ENCODE measurements at regions of chr16 and their contacts with region 1.

Region 1: GRCh38 chr16:29790183-29790952 is at the start of gene KIF22:
- DNase-seq: peak; percentile 100
- H3K4me3 Mint-ChIP-seq: peak within 1 kb of the TSS; percentile 100
- H3K27ac Mint-ChIP-seq: peak within 1 kb of the TSS; percentile 95
- H3K4me1 Mint-ChIP-seq: peaks cover 48% of the 10 kb centered on the region
- H3K27me3 Mint-ChIP-seq: no peaks in the 10 kb centered on the region
- total RNA-seq, gene KIF22: 187 to 192 TPM

Region 2: DNA sequence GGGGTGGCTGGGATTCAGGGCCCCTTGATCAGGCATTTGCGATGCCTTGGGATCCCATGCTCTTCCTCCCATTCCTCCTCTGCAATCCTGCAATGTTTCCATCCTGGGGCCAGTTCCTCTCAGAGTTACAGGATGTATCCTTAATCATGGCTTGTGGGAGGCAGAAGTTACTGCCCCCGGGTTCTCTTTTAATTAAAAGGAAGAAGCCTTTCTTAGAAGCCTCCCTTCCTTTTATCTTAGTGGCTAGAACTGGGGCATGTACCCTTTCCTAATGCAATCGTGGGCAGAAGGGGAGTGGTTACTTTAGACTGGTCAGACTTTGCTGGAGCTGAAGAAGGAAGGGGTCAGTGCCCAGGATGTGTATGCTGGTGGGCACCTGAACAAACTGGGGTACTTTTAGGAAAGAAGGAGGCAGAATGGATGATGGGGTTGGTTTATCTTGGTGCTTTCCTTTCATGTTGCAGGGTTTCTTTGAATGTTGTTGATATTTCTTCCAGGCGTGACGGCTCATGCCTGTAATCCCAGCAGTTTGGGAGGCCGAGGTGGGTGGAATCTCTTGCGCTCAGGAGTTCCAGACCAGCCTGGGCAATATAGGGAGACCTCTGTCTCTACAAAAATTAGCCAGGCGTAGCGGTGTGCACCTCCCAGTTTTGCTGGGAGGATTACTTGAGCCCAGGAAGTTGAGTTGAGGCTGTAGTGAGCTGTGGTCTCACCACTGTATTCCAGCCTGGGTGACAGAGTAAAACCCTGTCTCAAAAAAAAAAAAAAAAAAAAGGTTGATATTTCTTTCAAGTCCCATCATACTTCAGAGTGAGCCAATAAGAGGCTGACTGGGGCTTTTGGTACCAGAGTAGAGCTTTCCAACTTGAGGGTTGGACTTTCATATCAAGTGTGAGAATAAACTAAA is 140.5 kb before region 1 on chr16:
- CTCF ChIA-PET with region 1: no interaction called
- POLR2A ChIA-PET with region 1: no interaction called
- DNase-seq: no peak
- H3K4me3 Mint-ChIP-seq: no peak overlapping the region
- H3K27ac Mint-ChIP-seq: no peak overlapping the region
- H3K4me1 Mint-ChIP-seq: peaks cover 25% of the 10 kb centered on the region
- H3K27me3 Mint-ChIP-seq: no peaks in the 10 kb centered on the region

Region 3: GRCh38 chr16:29729116-29729521 is 61.2 kb before region 1 on chr16:
- CTCF ChIA-PET with region 1: interaction called, 10 read pairs
- POLR2A ChIA-PET with region 1: interaction called, 8 read pairs
- DNase-seq: no peak
- H3K4me3 Mint-ChIP-seq: no peak overlapping the region
- H3K27ac Mint-ChIP-seq: no peak overlapping the region
- H3K4me1 Mint-ChIP-seq: peaks cover 30% of the 10 kb centered on the region
- H3K27me3 Mint-ChIP-seq: peaks cover 16% of the 10 kb centered on the region

Region 4: DNA sequence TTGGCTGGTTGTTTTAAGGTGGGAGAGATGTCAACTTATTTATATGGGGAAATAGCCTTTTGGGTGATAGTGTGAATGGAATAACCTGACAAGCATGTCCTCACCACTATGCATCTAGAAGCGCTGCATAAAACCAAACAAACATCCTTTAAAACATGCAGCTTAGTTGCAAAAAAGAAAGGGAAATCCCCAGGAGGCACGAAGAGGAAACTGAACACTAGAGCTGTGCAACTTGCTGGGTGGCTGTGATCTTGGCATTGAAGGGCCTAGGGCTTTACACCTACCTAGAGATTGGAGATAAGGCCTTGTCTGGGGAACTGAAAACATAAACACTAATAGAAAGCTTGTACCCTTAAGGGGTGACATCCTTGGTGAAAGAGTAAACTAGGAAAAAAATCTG is 51.9 kb before region 1 on chr16:
- CTCF ChIA-PET with region 1: interaction called, 12 read pairs
- POLR2A ChIA-PET with region 1: interaction called, 27 read pairs
- DNase-seq: peak; percentile 56
- H3K4me3 Mint-ChIP-seq: no peak overlapping the region
- H3K27ac Mint-ChIP-seq: peak overlapping the region; percentile 74
- H3K4me1 Mint-ChIP-seq: peaks cover 68% of the 10 kb centered on the region
- H3K27me3 Mint-ChIP-seq: no peaks in the 10 kb centered on the region

Region 5: GRCh38 chr16:29745853-29746345 is 44.5 kb before region 1 on chr16 and contains the start of gene C16orf54:
- CTCF ChIA-PET with region 1: interaction called, 16 read pairs
- POLR2A ChIA-PET with region 1: interaction called, 45 read pairs
- DNase-seq: peak; percentile 98
- H3K4me3 Mint-ChIP-seq: peak within 1 kb of the TSS; percentile 98
- H3K27ac Mint-ChIP-seq: peak within 1 kb of the TSS; percentile 93
- H3K4me1 Mint-ChIP-seq: peaks cover 67% of the 10 kb centered on the region
- H3K27me3 Mint-ChIP-seq: no peaks in the 10 kb centered on the region
- total RNA-seq, gene C16orf54: 94.6 to 99.2 TPM

Region 6: GRCh38 chr16:29757950-29758466 is 32.4 kb before region 1 on chr16:
- CTCF ChIA-PET with region 1: interaction called, 12 read pairs
- POLR2A ChIA-PET with region 1: interaction called, 8 read pairs
- DNase-seq: no peak
- H3K4me3 Mint-ChIP-seq: no peak overlapping the region
- H3K27ac Mint-ChIP-seq: no peak overlapping the region
- H3K4me1 Mint-ChIP-seq: peaks cover 19% of the 10 kb centered on the region
- H3K27me3 Mint-ChIP-seq: no peaks in the 10 kb centered on the region

Region 7: DNA sequence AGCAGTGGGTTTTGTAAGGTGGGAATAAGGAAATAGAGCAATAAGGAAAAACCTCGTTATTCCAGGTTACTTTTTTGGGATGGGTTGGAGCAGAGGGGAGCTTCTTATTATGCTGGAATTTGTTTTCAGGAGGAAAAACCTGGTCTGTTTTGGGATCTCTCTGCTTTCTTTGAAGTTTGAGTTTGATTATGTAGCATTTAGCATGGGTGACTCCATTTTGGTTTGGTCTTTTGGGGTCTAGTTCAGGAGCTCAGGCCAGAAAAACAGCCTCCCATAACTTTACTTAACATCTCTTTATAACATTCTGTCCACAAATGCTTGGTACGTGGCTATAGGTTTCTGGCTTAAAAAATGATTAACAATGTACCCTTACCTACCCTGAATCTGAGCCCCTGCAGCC is 20.9 kb before region 1 on chr16:
- CTCF ChIA-PET with region 1: interaction called, 9 read pairs
- POLR2A ChIA-PET with region 1: interaction called, 10 read pairs
- DNase-seq: no peak
- H3K4me3 Mint-ChIP-seq: no peak overlapping the region
- H3K27ac Mint-ChIP-seq: no peak overlapping the region
- H3K4me1 Mint-ChIP-seq: no peaks in the 10 kb centered on the region
- H3K27me3 Mint-ChIP-seq: peaks cover 1% of the 10 kb centered on the region

Region 8: DNA sequence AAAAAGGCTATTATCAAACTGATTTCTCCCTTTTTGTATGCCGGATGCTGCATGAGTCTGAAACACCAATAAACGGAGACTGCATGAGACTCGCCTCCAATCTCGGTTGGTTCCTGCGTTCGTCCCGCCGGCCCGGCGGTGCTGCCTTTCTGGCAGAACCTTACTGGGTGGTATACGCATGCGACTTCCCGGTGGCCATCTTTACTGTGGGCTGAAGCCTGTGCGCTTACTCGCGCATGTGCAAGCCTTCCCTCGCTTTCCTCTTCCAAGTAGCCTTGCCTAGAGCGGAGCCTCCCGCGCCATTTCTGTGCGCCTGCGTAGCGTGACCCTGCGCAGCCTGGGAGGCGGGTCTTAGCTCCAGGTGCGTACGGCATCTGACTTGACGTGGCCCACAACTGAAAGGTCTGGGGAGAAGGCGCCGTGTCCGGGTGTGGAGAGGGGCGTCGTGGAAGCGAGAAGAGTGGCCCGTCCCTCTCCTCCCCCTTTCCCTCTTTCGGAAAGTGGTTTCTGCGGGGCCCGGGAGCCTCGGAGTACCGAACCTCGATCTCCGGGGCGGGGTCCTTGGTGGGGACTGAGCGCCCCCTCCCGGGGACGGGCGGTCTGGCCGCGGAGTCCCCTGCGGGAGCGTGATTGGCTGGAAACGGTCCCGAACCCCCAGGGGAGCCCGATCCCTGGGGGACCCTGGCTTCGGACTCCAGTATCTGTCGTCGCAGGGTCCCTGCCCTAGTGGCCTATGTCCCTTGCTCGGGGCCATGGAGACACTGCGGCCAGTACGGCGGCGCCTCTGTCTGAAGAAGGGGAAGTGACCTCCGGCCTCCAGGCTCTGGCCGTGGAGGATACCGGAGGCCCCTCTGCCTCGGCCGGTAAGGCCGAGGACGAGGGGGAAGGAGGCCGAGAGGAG is 25.7 kb after region 1 on chr16 and contains the start of gene PAGR1:
- CTCF ChIA-PET with region 1: interaction called, 22 read pairs
- POLR2A ChIA-PET with region 1: interaction called, 29 read pairs
- DNase-seq: peak; percentile 99
- H3K4me3 Mint-ChIP-seq: peak within 1 kb of the TSS; percentile 94
- H3K27ac Mint-ChIP-seq: peak within 1 kb of the TSS; percentile 94
- H3K4me1 Mint-ChIP-seq: peaks cover 72% of the 10 kb centered on the region
- H3K27me3 Mint-ChIP-seq: peaks cover 11% of the 10 kb centered on the region
- total RNA-seq, gene PAGR1: 26.6 to 28.4 TPM

Measured in activated CD4-positive, alpha-beta memory T cell treated with anti-CD3 and anti-CD28 coated beads, Interleukin-2, amount 10 ng/mL, durations not matched to agents 7 days and 5 days (primary cell).